ENCODE measurements at regions of chr10 and their contacts with region 1.

Region 1: GRCh38 chr10:116385994-116386809 is 41.4 kb upstream of the PNLIPRP3 start:
- DNase-seq: no peak
- ATAC-seq: no peak

Region 2: GRCh38 chr10:115171392-115171960 is 1214.7 kb before region 1 on chr10:
- intact Hi-C with region 1: loop called (anchors 10 kb)
- DNase-seq: no peak
- ATAC-seq: no peak

Region 3: GRCh38 chr10:115355162-115355760 is 1030.9 kb before region 1 on chr10:
- intact Hi-C with region 1: loop called (anchors 10 kb)
- DNase-seq: no peak
- ATAC-seq: peak; percentile 35

Region 4: DNA sequence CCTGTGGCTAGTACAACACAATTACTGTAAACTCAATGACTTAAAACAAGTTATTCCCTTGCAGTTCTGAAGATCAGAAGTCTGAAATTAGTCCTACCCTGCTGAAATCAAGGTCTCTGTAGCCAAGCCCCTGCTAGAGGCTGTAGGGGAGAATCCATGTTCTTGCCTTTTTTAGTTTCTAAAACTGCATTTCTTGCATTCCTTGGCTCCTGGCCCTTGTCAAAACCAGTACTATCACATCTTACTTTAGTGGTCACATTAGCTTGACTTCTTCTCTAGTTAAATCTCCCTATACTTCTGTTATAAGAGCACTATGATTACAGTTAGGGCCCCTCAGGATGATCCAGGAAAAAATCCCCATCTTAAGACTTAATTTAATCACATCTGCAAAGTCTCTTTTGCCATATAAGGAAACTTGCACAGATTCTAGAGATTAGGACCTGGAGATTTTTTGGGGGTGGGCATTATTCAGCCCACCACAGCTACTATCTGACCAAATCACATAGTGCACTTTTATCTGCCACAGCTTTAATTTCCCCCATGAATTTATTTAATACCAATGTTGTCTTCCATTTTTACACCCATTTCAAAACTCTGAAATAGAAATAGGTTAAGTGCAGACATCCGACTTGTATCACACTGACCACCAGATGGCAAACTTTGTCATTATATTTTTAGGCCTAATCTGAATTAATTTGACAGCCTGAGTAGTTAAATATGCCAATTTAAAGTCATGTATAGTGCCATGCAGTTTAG is 680.0 kb before region 1 on chr10:
- intact Hi-C with region 1: loop called (anchors 10 kb)
- DNase-seq: no peak
- ATAC-seq: no peak

Measured in left ventricle myocardium superior (tissue), 1 donor.